ENCODE measurements at regions of chr17 and their contacts with region 1.

Region 1: GRCh38 chr17:21457051-21458026 is 81.2 kb downstream of the KCNJ12 start:
- DNase-seq: peak; percentile 88 to 96
- H3K4me3 ChIP-seq: no peak overlapping the region
- H3K4me3 Mint-ChIP-seq: no peak overlapping the region
- H3K27ac Mint-ChIP-seq: no peak overlapping the region
- H3K4me1 ChIP-seq: no peaks in the 10 kb centered on the region
- H3K4me1 Mint-ChIP-seq: peaks cover 7% of the 10 kb centered on the region
- H3K27me3 ChIP-seq: no peaks in the 10 kb centered on the region
- H3K27me3 Mint-ChIP-seq: peaks cover 18% of the 10 kb centered on the region
- CTCF ChIP-seq: peak; percentile 90 to 94

Region 2: DNA sequence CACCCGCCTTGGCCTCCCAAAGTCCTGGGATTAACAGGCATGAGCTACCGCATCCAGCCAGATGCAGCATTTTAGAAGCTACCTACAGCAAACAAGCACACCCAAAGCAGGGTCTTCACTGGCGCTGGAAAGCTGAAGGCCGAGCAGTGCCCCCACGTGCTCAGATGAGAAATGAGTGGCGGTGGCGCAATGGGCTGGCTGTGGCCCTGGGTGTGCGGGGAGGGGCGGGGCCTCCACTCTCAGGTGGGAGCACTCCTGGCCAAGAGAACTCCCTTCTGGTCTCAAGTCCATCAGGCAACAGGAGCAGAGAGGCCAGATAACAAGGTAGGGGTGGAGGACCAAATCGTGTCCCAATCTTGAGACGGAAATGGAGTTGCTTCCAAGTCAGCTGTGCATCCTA is 255.5 kb before region 1 on chr17:
- CTCF ChIA-PET with region 1: interaction called, 11 read pairs
- POLR2A ChIA-PET with region 1: no interaction called
- intact Hi-C with region 1: no loop called
- DNase-seq: no peak
- H3K4me3 ChIP-seq: no peak overlapping the region
- H3K4me3 Mint-ChIP-seq: no peak overlapping the region
- H3K27ac Mint-ChIP-seq: no peak overlapping the region
- H3K4me1 ChIP-seq: no peaks in the 10 kb centered on the region
- H3K4me1 Mint-ChIP-seq: no peaks in the 10 kb centered on the region
- H3K27me3 ChIP-seq: no peaks in the 10 kb centered on the region
- H3K27me3 Mint-ChIP-seq: no peaks in the 10 kb centered on the region
- CTCF ChIP-seq: no peak

Region 3: DNA sequence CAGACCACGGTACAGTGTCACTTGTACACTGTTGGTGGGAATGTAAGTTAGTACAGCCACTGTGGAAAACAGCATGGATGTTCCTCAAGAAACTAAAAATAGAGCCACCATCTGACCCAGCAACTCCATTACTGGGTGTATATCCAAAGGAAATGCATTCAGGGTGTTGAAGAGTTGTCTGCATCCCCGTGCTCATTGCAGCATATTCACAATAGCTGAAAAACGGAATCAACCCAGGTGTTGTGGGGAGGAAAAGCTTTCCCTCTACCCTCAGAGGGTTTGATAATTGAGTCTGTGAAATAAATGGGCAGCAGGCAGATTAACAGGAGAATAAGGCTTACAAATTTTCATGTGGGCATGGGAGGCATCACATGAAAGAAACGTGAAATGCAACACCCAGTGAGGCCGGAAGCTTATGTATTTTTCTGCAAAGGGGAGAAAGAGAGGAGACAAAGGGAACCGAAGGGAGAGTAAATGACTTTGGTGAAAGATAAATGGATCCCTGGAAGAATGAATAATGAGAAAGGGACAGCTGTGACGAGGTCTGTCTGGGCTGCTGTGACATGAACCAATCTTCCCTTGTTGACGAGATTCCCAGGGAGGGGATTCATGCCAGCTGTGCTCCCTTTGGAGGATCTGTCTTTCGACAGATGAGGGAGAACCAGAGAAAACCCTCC is 25.0 kb after region 1 on chr17:
- CTCF ChIA-PET with region 1: no interaction called
- POLR2A ChIA-PET with region 1: no interaction called
- intact Hi-C with region 1: no loop called
- DNase-seq: no peak
- H3K4me3 ChIP-seq: no peak overlapping the region
- H3K4me3 Mint-ChIP-seq: no peak overlapping the region
- H3K27ac Mint-ChIP-seq: no peak overlapping the region
- H3K4me1 ChIP-seq: no peaks in the 10 kb centered on the region
- H3K4me1 Mint-ChIP-seq: no peaks in the 10 kb centered on the region
- H3K27me3 ChIP-seq: no peaks in the 10 kb centered on the region
- H3K27me3 Mint-ChIP-seq: peaks cover 39% of the 10 kb centered on the region
- CTCF ChIP-seq: no peak